HEK293 (cell line): ENCODE measurements at regions of chr18 and their contacts with region 1.

Region 1: GRCh38 chr18:616380-616995 is 19.7 kb downstream of the CLUL1 start:
- H3K4me3 ChIP-seq: no peak overlapping the region
- H3K27ac ChIP-seq: no peak overlapping the region
- H3K4me1 ChIP-seq: no peaks in the 10 kb centered on the region
- CTCF ChIP-seq: peak; percentile 37; the same call in 1 of the 2 replicates

Region 2: DNA sequence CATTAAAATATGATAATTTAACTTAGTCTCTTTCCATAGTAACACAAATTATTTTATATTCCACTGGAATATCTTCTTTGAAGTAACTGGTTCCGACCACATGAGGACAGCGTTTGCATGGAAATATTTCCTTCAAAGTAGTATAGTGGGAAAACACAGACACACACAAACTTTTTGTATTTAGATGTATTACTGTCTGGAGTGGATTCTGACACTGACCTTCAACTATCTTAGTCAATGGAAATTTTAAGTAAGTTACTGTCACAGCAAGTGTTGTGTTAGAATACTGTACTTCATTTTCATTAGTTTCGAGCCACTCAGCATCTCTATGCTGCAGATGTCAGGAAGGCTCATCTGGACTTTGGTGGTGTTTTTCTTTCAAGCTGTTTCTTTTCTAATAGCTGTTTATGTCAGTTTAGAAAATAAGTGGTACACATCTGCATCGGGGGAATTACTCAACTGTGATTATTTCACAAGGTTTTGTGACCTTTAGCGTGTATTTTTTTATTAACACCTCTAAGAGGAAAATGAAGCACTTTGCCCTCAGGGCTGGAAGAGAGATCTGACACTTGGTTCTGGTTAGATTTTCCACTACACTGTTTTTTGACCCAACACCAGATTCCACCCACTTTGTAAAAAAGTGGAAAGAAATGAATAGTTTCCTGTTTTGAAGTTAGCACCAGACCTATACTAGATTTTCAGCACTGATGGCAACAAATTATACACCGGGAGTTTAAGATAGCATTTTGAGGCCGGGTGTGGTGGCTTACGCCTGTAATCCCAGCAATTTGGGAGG is 329.8 kb before region 1 on chr18:
- CTCF ChIA-PET with region 1: interaction called, 10 read pairs
- POLR2A ChIA-PET with region 1: no interaction called
- H3K4me3 ChIP-seq: no peak overlapping the region
- H3K27ac ChIP-seq: no peak overlapping the region
- H3K4me1 ChIP-seq: no peaks in the 10 kb centered on the region
- CTCF ChIP-seq: no peak; the same call in 1 of the 2 replicates

Region 3: DNA sequence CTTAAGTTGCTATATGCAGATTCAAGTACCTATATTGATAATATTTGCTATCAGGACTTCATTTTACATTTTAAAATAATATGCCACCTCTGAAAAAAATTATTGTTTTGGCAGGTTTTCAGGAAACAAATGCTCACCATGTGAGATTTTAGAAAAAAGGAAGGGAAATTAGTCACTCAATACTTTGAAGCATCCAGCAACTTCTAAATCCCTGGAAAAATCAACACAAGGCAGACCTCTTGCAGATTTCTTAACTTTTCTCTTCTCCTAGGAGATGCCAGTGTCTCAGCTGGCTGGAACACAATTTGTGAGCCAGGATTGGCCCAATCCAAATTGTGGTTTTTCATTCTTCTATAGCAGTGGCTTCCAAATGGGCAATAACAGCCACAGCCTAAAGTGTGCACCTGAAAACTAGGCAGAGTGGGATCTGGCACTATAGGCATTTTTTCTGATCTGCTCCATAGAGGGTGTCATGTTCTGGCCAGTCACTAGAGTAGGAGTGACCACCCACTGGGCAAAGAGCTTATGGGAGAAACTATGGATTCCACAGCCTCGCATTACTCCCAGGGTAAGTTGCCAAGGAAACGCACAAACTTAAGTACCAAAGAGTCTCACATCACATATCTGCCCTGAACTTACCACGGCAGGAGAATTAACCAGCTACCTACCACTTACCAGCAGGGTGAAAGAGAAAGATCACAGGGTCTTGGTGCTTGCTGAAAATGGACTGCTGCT is 320.6 kb before region 1 on chr18:
- CTCF ChIA-PET with region 1: interaction called, 13 read pairs
- POLR2A ChIA-PET with region 1: no interaction called
- H3K4me3 ChIP-seq: no peak overlapping the region
- H3K27ac ChIP-seq: no peak overlapping the region
- H3K4me1 ChIP-seq: peaks cover 3% of the 10 kb centered on the region
- CTCF ChIP-seq: no peak

Region 4: GRCh38 chr18:596288-596881 is 20.1 kb before region 1 on chr18:
- CTCF ChIA-PET with region 1: interaction called, 12 read pairs
- POLR2A ChIA-PET with region 1: no interaction called
- H3K4me3 ChIP-seq: no peak overlapping the region
- H3K27ac ChIP-seq: no peak overlapping the region
- H3K4me1 ChIP-seq: peaks cover 14% of the 10 kb centered on the region
- CTCF ChIP-seq: no peak

Region 5: GRCh38 chr18:604771-605170 is 11.7 kb before region 1 on chr18:
- CTCF ChIA-PET with region 1: interaction called, 20 read pairs
- POLR2A ChIA-PET with region 1: no interaction called
- H3K4me3 ChIP-seq: no peak overlapping the region
- H3K27ac ChIP-seq: no peak overlapping the region
- H3K4me1 ChIP-seq: peaks cover 8% of the 10 kb centered on the region
- CTCF ChIP-seq: no peak